ENCODE measurements at regions of chr3 and their contacts with region 1.

Region 1: DNA sequence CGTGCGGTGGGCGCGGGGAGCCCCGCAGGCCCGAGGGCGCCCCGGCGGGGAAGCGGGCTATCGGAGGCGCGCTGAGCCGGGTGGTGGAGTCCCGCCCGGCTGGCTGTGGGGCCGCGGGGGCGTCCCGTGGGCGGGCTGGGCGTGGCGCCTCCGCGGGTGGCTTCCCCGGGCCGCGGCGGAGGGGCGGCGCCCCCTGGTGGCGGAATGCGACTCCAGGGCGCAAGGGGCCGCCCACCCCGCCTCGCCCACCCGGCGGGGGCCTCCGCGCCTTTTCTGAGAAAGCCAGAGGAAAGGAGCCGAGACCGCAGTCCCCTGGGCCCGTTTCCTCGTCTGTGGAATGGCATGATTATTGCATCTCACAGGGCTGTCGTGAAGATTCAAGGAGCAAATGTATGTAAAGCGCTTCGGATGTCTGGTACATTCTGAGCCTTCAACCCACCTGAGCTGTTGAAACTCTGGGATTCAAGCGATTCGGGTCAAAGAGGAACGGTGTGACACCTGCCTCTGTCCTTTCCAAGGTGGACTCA is 31.9 kb upstream of the RAB6B start:
- DNase-seq: peak in 1 of 2 experiments; percentile 38
- ATAC-seq: peak; percentile 72 to 84
- H3K4me3 ChIP-seq: peak overlapping the region; percentile 60
- H3K27ac ChIP-seq: peak overlapping the region; percentile 61 to 83; a peak in 5 of 6 replicates
- H3K4me1 ChIP-seq: no peaks in the 10 kb centered on the region
- CTCF ChIP-seq: peak; percentile 83
- EP300 ChIP-seq: no peak
- POLR2A ChIP-seq: no peak
- RAD21 ChIP-seq: peak in 1 of 2 experiments; percentile 71; a peak in 4 of 5 replicates

Region 2: DNA sequence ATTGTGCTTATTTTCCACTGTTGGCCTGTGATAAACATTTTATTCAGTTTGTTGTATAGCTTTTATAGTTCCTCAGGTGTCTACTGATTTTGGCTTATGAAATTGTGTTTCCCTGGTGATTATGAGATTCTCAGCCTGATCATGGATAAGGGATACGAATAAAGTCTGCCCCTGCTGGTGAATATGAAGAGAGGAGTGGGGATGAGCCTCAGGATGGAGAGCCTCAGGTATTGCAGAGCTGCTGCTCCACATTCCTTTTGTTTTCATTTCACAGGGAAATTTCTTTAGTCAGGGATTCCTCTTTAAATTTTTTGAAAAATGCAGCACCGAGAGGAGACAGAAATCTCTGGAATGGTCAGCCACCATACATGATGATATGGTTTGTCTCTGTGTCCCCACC is 17.2 kb before region 1 on chr3:
- CTCF ChIA-PET with region 1: interaction called, 10 read pairs
- POLR2A ChIA-PET with region 1: no interaction called
- DNase-seq: no peak
- ATAC-seq: peak in 1 of 2 experiments; percentile 58; a peak in 1 of 6 replicates
- H3K4me3 ChIP-seq: no peak overlapping the region
- H3K27ac ChIP-seq: no peak overlapping the region
- H3K4me1 ChIP-seq: no peaks in the 10 kb centered on the region
- CTCF ChIP-seq: no peak
- EP300 ChIP-seq: no peak
- POLR2A ChIP-seq: no peak
- RAD21 ChIP-seq: no peak

Region 3: GRCh38 chr3:133938770-133939462 is 11.3 kb after region 1 on chr3:
- CTCF ChIA-PET with region 1: interaction called, 11 read pairs
- POLR2A ChIA-PET with region 1: no interaction called
- DNase-seq: no peak
- ATAC-seq: peak in 1 of 2 experiments; percentile 36; a peak in 2 of 6 replicates
- H3K4me3 ChIP-seq: no peak overlapping the region
- H3K27ac ChIP-seq: no peak overlapping the region
- H3K4me1 ChIP-seq: peaks cover 11% of the 10 kb centered on the region
- CTCF ChIP-seq: no peak
- EP300 ChIP-seq: no peak
- POLR2A ChIP-seq: no peak
- RAD21 ChIP-seq: 0 out of 5 replicates have a peak, but pooled peaks of 1 of the 2 experiments have one; percentile 8

Measured in A549 (cell line).